Ascending aorta (tissue), 2 donors: ENCODE measurements at regions of chr10 and their contacts with region 1.

Region 1: DNA sequence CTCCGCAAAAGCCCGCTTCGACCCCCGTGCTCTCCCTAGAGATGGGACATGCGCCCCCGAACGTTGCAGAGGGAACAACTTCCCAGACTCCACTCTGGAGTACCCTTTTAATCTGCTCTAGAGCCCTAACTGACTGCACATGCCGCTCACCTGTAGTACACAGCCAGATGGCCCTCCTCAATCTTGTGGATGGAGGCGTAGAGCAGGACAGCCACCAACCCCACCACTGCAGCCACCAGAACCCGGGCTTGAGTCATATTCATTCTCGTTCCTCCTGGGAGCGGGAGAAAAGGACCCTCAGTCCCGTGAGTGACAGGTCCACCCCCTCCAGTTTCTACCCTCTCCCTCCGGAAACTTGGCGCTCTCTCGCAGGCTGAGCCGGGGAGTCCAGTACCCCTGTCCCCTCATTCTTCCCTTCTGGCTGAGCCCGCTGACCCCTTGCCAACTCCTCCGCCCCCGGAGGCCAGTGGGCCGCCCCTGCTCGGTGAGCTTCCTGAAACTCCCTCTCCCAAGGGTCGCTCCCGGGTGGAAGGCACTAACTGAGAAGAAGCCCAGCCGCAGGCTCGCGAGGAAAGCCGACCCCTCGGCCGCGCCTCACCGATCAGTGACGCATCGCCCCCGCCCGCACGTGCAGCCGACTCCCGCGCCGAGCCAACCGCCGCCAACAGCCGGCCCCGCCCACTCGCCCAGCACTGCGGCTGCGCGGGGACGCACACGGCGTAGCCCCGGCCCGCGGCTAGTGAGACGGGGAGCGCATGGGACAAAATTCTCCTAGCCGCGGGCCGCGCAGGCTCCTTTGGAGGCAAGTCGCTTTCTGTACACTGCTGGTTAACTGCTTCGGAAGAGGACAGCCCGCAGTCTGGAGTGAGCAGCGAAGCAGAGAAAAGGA is at the start of gene ERLIN1:
- DNase-seq: peak; percentile 51 to 96
- H3K4me3 ChIP-seq: peak within 1 kb of the TSS; percentile 70 to 76
- H3K27ac ChIP-seq: peak within 1 kb of the TSS; percentile 83 to 88
- H3K4me1 ChIP-seq: peaks cover 7 to 13% of the 10 kb centered on the region in 2 donors
- H3K27me3 ChIP-seq: no peaks in the 10 kb centered on the region
- CTCF ChIP-seq: no peak
- total RNA-seq, gene ERLIN1: 16.6 TPM

Region 2: GRCh38 chr10:99430451-99431189 is 755.0 kb before region 1 on chr10 and contains the start of gene GOT1:
- intact Hi-C with region 1: loop called (anchors 10 kb)
- DNase-seq: peak; percentile 92 to 98
- H3K4me3 ChIP-seq: peak within 1 kb of the TSS; percentile 72 to 96
- H3K27ac ChIP-seq: peak within 1 kb of the TSS; percentile 74 to 77
- H3K4me1 ChIP-seq: peaks cover 7 to 10% of the 10 kb centered on the region in 2 donors
- H3K27me3 ChIP-seq: no peaks in the 10 kb centered on the region
- CTCF ChIP-seq: no peak
- total RNA-seq, gene GOT1: 4.4 TPM

Region 3: DNA sequence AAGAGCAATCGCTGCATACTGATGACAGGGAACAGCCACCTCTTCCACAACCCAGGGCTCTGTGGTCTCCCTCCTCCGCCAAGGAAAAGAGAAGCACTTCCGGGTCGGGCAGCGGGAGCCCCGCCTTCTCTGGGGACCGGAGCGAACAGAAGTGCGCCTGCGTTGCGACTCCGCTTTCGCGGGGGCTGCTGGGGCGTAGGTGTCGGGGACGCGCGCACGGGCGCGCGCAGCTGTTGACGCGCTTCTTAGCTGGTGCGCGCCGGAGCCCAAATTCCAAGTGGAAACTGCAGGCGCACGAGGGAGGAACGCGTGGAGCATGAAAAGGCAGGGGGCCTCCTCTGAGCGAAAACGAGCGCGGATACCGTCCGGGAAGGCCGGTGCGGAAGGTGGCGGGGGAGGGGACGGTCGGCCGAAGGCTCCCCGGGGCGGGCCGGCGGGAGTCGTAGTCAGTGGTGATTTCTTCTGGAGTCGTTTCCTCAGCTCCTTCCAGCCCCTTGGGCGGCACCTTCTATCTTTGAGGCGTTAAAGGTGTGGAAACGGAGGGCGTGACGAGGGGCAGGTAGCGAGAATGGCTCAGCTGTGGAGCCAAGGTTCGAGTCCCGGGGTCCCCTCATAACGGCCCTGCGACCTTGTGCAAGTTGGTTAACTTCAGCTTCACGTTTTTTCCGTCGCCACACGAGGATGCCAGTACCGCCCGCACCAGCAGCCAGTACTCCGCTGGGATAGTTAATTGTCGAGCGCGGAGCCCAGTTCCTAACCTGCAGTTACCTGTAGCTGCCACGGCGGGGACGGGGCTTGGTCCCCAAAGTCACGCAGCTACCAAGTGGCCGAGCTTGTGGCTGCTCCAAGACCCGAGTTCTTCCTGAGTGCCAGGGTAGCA is 453.3 kb before region 1 on chr10 and contains the starts of genes COX15 and CUTC:
- intact Hi-C with region 1: loop called (anchors 2 kb)
- DNase-seq: peak; percentile 87 to 98
- H3K4me3 ChIP-seq: peak within 1 kb of the TSS; percentile 76 to 88
- H3K27ac ChIP-seq: peak within 1 kb of the TSS; percentile 85 to 91
- H3K4me1 ChIP-seq: peaks cover 0 to 15% of the 10 kb centered on the region in 2 donors
- H3K27me3 ChIP-seq: no peaks in the 10 kb centered on the region
- CTCF ChIP-seq: peak in 1 of 3 experiments; percentile 23
- total RNA-seq, gene COX15: 22.0 TPM
- total RNA-seq, gene CUTC: 8.0 TPM

Region 4: DNA sequence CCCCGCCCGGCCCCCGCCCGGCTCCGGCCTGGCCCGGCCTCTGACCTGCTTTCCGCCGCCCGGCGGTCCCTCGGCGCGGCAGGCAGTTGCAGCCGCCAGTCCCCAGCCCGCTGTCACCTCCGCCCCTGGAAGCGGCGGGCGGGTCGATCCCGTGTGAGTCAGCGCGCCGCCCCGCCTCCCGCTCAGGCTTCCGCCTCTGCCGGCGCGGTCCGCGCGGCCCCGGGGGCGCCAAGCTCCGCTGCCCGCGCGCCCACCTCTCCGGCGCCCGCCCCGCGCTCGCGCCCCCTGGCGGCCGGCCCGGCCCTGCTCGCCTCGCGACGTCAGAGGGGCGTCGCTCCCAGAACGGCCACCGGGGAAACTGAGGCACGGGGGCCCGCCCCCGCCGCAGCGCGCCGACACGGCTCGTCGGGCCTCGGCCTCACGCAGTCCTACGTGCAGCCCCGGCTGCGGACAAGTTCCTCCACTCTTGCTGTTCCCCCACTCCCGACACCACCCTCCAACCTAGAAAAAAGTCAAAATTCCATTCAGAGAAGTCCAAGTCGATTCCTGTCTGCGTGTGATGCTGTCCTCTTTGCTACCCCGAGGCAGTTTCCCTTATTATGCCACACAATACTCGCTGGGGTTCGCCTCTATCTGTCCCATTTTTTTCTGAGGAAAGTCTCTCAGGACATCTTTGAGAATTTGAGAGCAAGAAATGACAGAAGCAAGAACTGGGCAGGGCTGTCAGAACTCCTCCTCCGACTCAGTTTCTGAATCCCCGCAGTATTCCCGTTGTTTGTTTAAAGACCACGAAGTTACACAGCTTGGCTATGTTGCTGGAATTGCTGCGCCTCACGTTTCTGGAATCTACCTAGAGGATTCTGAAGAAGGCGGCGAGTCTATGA is 175.6 kb before region 1 on chr10 and contains the start of gene DNMBP:
- intact Hi-C with region 1: loop called (anchors 5 kb)
- DNase-seq: peak; percentile 14 to 89
- H3K4me3 ChIP-seq: peak within 1 kb of the TSS; percentile 78 to 98
- H3K27ac ChIP-seq: peak within 1 kb of the TSS; percentile 65 to 80
- H3K4me1 ChIP-seq: peaks cover 3 to 19% of the 10 kb centered on the region in 2 donors
- H3K27me3 ChIP-seq: no peaks in the 10 kb centered on the region
- CTCF ChIP-seq: peak; percentile 35 to 85 (median 49)
- total RNA-seq, gene DNMBP: 15.9 TPM

Region 5: GRCh38 chr10:100267237-100268104 is 81.9 kb after region 1 on chr10 and contains the start of gene CWF19L1:
- intact Hi-C with region 1: loop called (anchors 1 kb)
- DNase-seq: peak; percentile 47 to 91
- H3K4me3 ChIP-seq: peak within 1 kb of the TSS; percentile 73 to 89
- H3K27ac ChIP-seq: peak within 1 kb of the TSS; percentile 70 to 84
- H3K4me1 ChIP-seq: peaks cover 4 to 11% of the 10 kb centered on the region in 2 donors
- H3K27me3 ChIP-seq: no peaks in the 10 kb centered on the region
- CTCF ChIP-seq: no peak
- total RNA-seq, gene CWF19L1: 14.3 TPM

Region 6: GRCh38 chr10:100373298-100374136 is 187.9 kb after region 1 on chr10:
- intact Hi-C with region 1: loop called (anchors 2 kb)
- DNase-seq: peak; percentile 99 to 100
- H3K4me3 ChIP-seq: peak overlapping the region; percentile 56 to 63
- H3K27ac ChIP-seq: peak overlapping the region; percentile 90 to 92
- H3K4me1 ChIP-seq: peaks cover 7 to 25% of the 10 kb centered on the region in 2 donors
- H3K27me3 ChIP-seq: no peaks in the 10 kb centered on the region
- CTCF ChIP-seq: no peak